ENCODE measurements at regions of chr2 and their contacts with region 1.

Region 1: DNA sequence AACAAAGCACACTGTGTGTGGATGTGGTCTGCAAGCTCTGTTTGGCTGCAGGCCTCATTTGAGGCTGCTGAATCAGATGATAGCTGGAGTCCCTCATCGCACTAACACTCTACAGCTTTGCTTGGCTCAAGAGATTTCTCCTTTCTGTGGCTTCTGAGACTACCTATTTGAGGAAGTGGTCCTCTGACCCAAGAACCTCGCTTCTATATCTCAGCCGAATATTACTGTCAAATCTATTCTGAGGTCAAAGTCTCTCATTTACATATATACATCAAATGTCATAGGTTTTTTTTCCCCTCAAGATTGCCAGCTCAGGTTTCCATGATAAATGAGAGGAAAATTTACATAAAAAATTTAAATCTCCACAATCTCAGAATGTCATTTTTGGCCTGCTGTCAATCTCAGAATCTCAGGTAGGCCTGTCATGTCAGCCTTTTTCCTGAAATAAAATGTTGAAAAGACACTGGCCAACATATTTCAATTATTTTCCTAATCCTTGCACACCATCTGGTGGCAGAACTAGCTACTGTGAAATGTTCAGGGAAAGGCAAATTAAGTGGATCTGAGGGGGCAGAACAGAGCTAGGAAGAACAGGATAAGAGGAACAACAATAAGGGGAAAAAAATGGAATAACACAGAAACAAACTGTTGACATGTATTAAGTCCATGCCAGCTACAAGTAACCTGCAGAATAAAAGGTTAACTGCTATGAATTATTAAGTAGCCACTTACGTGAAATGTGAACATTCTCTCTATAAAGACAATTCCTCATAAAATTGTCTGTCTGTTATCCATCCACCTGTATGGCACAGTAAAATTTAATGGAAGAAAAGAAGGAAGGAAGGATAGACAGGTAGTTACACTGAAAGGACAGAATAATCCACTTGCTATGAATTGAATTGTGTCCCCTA is 39.3 kb downstream of the AP1S3 start:
- DNase-seq: peak; percentile 14 to 66
- ATAC-seq: peak; percentile 79 to 81
- H3K4me3 ChIP-seq: no peak overlapping the region
- H3K27ac ChIP-seq: peak overlapping the region; percentile 75 to 87
- H3K4me1 ChIP-seq: peaks cover 76% of the 10 kb centered on the region
- CTCF ChIP-seq: peak; percentile 88
- EP300 ChIP-seq: no peak
- POLR2A ChIP-seq: no peak
- RAD21 ChIP-seq: peak; percentile 92 to 94

Region 2: GRCh38 chr2:222973237-222973636 is 824.8 kb before region 1 on chr2:
- CTCF ChIA-PET with region 1: interaction called, 31 read pairs
- POLR2A ChIA-PET with region 1: no interaction called
- DNase-seq: no peak
- ATAC-seq: no peak
- H3K4me3 ChIP-seq: no peak overlapping the region
- H3K27ac ChIP-seq: peak overlapping the region in 1 of 2 experiments; percentile 27; a peak in 1 of 6 replicates
- H3K4me1 ChIP-seq: no peaks in the 10 kb centered on the region
- CTCF ChIP-seq: no peak
- EP300 ChIP-seq: no peak
- POLR2A ChIP-seq: no peak
- RAD21 ChIP-seq: no peak

Region 3: DNA sequence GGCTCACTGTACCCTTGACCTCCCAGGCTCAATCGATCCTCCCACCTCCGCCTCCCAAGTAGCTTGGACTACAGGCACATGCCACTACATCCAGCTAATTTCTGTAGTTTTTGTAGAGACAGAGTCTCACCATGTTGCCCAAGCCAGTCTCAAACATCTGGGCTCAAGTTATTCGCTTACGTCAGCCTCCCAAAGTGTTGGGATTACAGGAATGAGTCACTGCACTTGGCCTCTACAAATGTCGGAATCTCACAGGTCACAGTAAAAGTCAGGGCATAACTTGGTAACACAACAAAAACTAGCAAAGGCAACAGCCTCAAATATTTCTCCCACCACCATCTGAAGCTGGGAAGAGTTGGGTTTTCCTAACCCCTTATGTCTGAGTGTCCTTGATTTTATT is 221.2 kb before region 1 on chr2:
- CTCF ChIA-PET with region 1: no interaction called
- POLR2A ChIA-PET with region 1: no interaction called
- DNase-seq: peak in 1 of 2 experiments; percentile 88
- ATAC-seq: peak; percentile 88 to 93
- H3K4me3 ChIP-seq: no peak overlapping the region
- H3K27ac ChIP-seq: peak overlapping the region; percentile 55 to 79
- H3K4me1 ChIP-seq: peaks cover 22% of the 10 kb centered on the region
- CTCF ChIP-seq: no peak
- EP300 ChIP-seq: no peak
- POLR2A ChIP-seq: no peak
- RAD21 ChIP-seq: no peak; a peak in 1 of 5 replicates

Region 4: DNA sequence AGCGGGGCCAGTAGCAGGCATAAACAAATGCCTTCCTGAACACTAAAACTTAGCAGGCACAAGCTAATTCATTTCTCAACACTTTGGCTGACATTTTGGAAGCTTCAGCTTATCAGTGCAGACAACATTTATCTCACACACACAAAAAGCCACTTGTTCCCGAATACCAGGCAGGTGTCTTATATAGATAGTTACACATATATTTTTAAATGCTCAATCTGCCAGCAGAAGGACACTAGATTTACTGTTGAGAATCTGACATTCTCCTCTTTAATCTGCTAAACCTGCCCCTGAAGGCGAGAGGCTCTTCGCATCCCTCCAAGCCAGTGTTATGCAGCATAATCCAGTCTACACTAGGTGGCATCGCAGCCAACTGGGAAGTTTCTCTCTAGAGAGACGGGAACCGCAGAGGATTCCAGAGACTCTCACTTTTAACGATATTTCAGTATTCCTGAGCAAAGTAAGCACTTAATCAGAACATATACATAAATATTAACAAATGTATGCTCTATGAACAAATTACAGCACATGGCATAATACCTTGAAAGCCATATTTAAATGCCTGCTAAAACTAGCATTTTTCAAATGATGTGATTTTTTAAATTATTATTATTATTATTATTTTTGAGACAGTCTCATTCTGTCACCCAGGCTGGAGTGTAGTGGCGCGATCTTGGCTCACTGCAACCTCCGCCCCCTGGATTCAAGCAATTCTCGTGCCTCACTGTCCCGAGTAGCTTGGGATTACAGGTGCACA is 105.7 kb before region 1 on chr2:
- CTCF ChIA-PET with region 1: interaction called, 27 read pairs
- POLR2A ChIA-PET with region 1: no interaction called
- DNase-seq: peak; percentile 58 to 76
- ATAC-seq: peak; percentile 95
- H3K4me3 ChIP-seq: no peak overlapping the region
- H3K27ac ChIP-seq: peak overlapping the region; percentile 69 to 75
- H3K4me1 ChIP-seq: peaks cover 35% of the 10 kb centered on the region
- CTCF ChIP-seq: peak; percentile 89
- EP300 ChIP-seq: no peak
- POLR2A ChIP-seq: no peak
- RAD21 ChIP-seq: peak; percentile 87 to 90

Region 5: DNA sequence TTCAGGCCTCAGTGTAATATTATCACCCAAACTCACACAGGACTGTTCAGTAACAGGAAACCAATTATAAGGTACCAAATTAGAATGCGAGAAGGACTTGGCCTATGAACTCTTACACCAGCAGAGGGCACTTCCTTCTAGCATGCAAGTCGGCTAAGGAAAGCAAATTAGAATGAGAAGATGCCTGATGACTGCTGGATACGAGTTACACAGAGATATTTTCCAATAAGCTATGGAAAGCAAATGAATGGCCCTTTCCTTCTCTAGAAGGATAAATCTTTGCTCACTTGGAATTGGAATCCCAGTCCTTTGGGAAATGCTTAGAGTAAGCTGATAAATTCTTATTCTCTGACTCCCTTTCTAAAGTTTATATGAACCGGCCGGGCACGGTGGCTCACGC is 70.5 kb before region 1 on chr2:
- CTCF ChIA-PET with region 1: interaction called, 19 read pairs
- POLR2A ChIA-PET with region 1: no interaction called
- DNase-seq: peak; percentile 60 to 88
- ATAC-seq: peak; percentile 41 to 52; a peak in 4 of 6 replicates
- H3K4me3 ChIP-seq: no peak overlapping the region
- H3K27ac ChIP-seq: peak overlapping the region; percentile 90 to 97
- H3K4me1 ChIP-seq: peaks cover 39% of the 10 kb centered on the region
- CTCF ChIP-seq: peak; percentile 77
- EP300 ChIP-seq: no peak
- POLR2A ChIP-seq: no peak
- RAD21 ChIP-seq: peak; percentile 70 to 80

Region 6: GRCh38 chr2:223760838-223761502 is 37.1 kb before region 1 on chr2:
- CTCF ChIA-PET with region 1: interaction called, 19 read pairs
- POLR2A ChIA-PET with region 1: no interaction called
- DNase-seq: peak; percentile 42 to 90
- ATAC-seq: peak; percentile 94 to 96
- H3K4me3 ChIP-seq: no peak overlapping the region
- H3K27ac ChIP-seq: peak overlapping the region; percentile 94 to 96
- H3K4me1 ChIP-seq: peaks cover 57% of the 10 kb centered on the region
- CTCF ChIP-seq: peak; percentile 47
- EP300 ChIP-seq: peak in 1 of 2 experiments; percentile 43; a peak in 1 of 5 replicates
- POLR2A ChIP-seq: no peak
- RAD21 ChIP-seq: peak; percentile 31 to 42; a peak in 4 of 5 replicates

Region 7: DNA sequence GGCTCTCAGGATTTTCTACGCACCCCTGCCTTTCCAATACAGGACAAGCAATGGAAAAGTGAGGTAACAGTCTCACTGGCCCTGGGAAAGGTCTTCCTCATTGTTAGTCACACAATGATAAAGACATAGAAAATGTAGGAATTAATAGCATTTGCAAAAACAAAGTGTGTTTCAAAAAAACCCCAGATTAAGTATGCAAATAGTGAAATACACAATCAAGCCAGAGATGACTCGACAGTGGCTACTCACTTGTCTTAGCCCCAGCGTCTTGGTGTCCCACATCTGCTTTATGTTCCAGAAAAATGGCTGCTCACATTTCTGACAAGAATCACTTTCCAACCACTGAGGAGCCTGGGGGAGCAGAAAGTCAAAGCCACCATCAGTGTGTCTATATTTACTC is 86.3 kb after region 1 on chr2:
- CTCF ChIA-PET with region 1: no interaction called
- POLR2A ChIA-PET with region 1: no interaction called
- DNase-seq: no peak
- ATAC-seq: no peak; a peak in 1 of 6 replicates
- H3K4me3 ChIP-seq: no peak overlapping the region
- H3K27ac ChIP-seq: no peak overlapping the region
- H3K4me1 ChIP-seq: peaks cover 16% of the 10 kb centered on the region
- CTCF ChIP-seq: no peak
- EP300 ChIP-seq: no peak
- POLR2A ChIP-seq: no peak
- RAD21 ChIP-seq: no peak

Region 8: DNA sequence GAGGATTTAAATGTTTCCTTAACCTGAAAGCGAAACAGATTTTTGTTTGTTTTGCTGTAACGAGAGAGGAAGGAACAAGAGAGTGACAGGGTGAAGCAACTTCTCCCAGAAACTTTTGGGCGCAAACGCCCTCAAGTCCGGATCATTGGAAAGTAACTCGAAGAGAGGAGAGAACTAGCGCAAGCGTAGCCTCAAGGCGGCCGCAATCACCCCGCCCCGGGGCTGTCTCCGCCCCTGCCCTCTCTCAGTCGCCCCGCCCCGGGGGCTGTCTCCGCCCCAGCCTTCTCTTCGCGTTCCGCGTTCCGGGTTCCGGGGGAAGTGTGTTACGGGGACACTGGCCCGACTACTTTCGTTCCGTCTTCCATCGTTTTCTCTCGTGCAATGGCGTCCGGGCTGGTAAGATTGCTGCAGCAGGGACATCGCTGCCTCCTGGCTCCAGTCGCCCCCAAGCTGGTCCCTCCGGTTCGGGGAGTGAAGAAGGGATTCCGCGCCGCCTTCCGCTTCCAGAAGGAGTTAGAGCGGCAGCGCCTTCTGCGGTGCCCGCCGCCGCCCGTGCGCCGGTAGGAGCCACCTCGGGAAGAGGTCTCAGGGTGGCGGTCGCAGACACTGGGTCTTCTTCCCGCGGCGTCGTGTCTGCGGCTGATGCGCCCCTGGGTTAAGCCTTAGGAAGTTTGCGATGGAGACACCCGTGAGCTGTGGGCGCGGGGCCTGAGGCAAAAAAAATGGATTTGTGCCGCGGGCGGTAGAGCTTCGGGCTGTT is 159.2 kb after region 1 on chr2 and contains the start of gene MRPL44:
- CTCF ChIA-PET with region 1: no interaction called
- POLR2A ChIA-PET with region 1: no interaction called
- DNase-seq: peak; percentile 71 to 94
- ATAC-seq: peak; percentile 98 to 100
- H3K4me3 ChIP-seq: peak within 1 kb of the TSS; percentile 59
- H3K27ac ChIP-seq: peak within 1 kb of the TSS; percentile 88 to 96
- H3K4me1 ChIP-seq: peaks cover 21% of the 10 kb centered on the region; the same call in 2 of the 3 replicates
- CTCF ChIP-seq: no peak
- EP300 ChIP-seq: no peak
- POLR2A ChIP-seq: peak; percentile 61
- RAD21 ChIP-seq: peak; percentile 31 to 52
- polyA plus RNA-seq, gene MRPL44: 37.8 and 39.2 TPM in 2 replicates